ENCODE measurements at regions of chr17 and their contacts with region 1.

Region 1: DNA sequence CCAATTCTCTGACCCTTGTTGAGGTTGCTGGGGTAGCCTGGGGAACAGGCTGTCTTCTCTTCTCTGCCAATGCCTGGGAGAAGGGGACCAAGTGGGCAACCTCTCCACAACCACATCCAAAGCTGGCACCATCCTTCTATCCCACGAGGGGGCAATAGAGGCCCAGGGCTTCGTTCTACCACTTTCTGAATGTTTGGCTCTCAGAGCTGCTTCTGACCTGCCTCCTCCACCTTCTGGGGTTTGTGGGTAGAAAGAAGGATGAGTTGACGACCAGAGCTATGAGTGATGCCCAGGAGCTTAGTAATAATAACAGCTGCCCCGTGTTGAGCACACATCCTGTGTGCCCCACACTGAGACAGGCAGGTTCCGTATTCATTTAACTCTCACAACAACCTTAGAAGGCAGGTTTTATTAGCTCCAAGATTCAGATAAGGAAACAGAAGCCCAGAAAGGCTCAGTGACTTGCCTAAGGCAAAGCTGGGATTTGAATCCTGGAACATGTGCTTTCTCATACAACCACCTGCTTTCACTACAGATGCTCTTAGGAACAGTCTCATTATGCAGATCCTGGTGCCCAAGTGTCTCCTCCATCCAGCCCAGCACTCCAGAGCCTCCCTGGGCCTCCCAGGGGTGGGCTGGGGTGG is 11.1 kb downstream of the TSPOAP1 start:
- DNase-seq: peak; percentile 37 to 52 (median 52)
- ATAC-seq: peak; percentile 80 to 95 (median 90)
- H3K4me3 ChIP-seq: no peak overlapping the region
- H3K27ac ChIP-seq: no peak overlapping the region
- H3K4me1 ChIP-seq: no peaks in the 10 kb centered on the region
- H3K27me3 ChIP-seq: no peaks in the 10 kb centered on the region
- CTCF ChIP-seq: peak; percentile 66 to 83 (median 70)
- POLR2A ChIP-seq: no peak

Region 2: GRCh38 chr17:58254803-58255388 is 62.6 kb before region 1 on chr17:
- intact Hi-C with region 1: no loop called
- DNase-seq: no peak
- ATAC-seq: peak in 1 of 4 donors; percentile 40
- H3K4me3 ChIP-seq: no peak overlapping the region
- H3K27ac ChIP-seq: no peak overlapping the region
- H3K4me1 ChIP-seq: no peaks in the 10 kb centered on the region
- H3K27me3 ChIP-seq: no peaks in the 10 kb centered on the region
- CTCF ChIP-seq: no peak
- POLR2A ChIP-seq: no peak

Region 3: DNA sequence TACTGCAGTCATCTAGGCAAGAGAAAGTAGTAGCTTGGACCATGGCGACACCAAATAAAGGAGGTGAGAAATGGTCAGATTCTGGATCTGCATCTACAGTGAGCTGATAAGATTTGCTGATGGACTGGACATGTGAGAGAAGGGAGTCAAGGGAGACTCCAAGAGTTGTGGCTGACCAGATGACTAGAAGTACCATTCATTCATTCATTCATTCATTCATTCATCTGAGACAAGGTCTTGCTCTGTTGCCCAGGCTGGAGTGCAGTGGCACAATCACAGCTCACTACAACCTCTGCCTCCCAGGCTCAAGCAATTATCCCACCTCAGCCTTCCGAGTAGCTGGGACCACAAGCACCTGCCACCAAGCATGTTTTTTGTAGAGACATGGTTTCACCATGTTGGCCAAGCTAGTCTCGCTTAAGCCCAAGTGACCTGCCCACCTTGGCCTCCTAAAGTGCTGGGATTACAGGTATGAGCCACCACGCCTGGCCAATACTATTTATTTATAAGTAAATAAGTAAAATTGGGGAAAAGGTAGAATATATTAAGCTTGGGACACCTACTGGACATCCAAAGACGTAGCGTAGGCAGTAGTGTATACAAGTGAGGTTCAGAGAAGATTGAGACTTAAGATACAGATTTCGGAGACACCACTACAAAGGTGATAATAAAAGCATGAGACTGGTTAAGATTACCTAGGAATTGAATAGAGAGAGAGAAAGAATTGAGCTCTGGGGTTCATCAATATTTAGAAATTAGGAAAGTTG is 115.4 kb after region 1 on chr17:
- intact Hi-C with region 1: loop called in 1 of 2 experiments (anchors 5 kb)
- DNase-seq: no peak
- ATAC-seq: no peak
- H3K4me3 ChIP-seq: no peak overlapping the region
- H3K27ac ChIP-seq: no peak overlapping the region
- H3K4me1 ChIP-seq: no peaks in the 10 kb centered on the region
- H3K27me3 ChIP-seq: no peaks in the 10 kb centered on the region
- CTCF ChIP-seq: peak in 1 of 4 donors; percentile 6
- POLR2A ChIP-seq: no peak

Region 4: GRCh38 chr17:58447039-58447975 is 129.8 kb after region 1 on chr17:
- intact Hi-C with region 1: loop called (anchors 5 kb)
- DNase-seq: peak; percentile 65 to 78 (median 76)
- ATAC-seq: peak; percentile 96 to 99 (median 98)
- H3K4me3 ChIP-seq: no peak overlapping the region
- H3K27ac ChIP-seq: no peak overlapping the region
- H3K4me1 ChIP-seq: no peaks in the 10 kb centered on the region
- H3K27me3 ChIP-seq: no peaks in the 10 kb centered on the region
- CTCF ChIP-seq: peak; percentile 81 to 90 (median 82)
- POLR2A ChIP-seq: no peak

Measured in right lobe of liver (tissue), 6 donors.